Motor neuron (in vitro differentiated cells): ENCODE measurements at regions of chr9 and their contacts with region 1.

Region 1: GRCh38 chr9:32571969-32572899 is 725 bp downstream of the NDUFB6 start:
- ATAC-seq: peak; percentile 61 to 82 (median 78)
- H3K4me3 ChIP-seq: peak overlapping the region; percentile 56 to 90 (median 86)
- H3K27ac ChIP-seq: peak overlapping the region; percentile 66 to 93
- H3K4me1 ChIP-seq: peaks cover 0 to 12% of the 10 kb centered on the region in 2 donors

Region 2: GRCh38 chr9:32384364-32385151 is 187.7 kb before region 1 on chr9 and contains the start of gene ACO1:
- in situ Hi-C with region 1: loop called (anchors 10 to 25 kb)
- ATAC-seq: peak; percentile 89 to 97 (median 93)
- H3K4me3 ChIP-seq: peak within 1 kb of the TSS; percentile 64 to 95 (median 72)
- H3K27ac ChIP-seq: peak within 1 kb of the TSS; percentile 46 to 67
- H3K4me1 ChIP-seq: peaks cover 0 to 2% of the 10 kb centered on the region in 2 donors
- total RNA-seq, gene ACO1: 13.4 to 44.4 (median 16.0) TPM